ENCODE measurements at regions of chr2 and their contacts with region 1.

Region 1: DNA sequence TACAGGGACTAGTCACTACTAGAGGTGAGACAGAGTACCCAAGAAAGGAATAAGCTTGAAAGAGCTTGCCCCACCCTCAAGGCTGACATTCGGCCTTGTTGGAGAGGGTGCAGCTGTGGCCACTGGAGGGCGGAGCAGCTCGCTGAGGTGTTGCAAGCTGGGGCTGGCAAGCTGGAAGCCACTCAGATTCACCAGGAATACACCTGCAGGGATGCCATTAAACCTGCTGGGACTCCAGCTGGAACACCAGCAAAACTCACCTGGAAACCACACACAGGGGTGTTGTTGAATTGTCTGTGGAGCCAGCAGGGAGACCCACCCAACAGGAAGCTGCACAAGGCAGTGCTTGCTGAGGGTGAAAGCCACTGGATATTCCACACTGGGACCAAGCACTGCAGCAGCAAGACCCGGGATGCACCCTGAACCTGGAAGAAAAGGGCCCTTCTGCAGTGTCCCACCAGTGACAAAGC is 26.1 kb downstream of the KCTD18 start:
- DNase-seq: no peak
- H3K4me3 ChIP-seq: no peak overlapping the region
- H3K27ac ChIP-seq: no peak overlapping the region
- H3K4me1 ChIP-seq: no peaks in the 10 kb centered on the region
- H3K27me3 ChIP-seq: no peaks in the 10 kb centered on the region
- CTCF ChIP-seq: peak; percentile 6 to 33
- POLR2A ChIP-seq: no peak

Region 2: GRCh38 chr2:199922856-199923255 is 560.9 kb before region 1 on chr2:
- CTCF ChIA-PET with region 1: no interaction called
- POLR2A ChIA-PET with region 1: no interaction called
- dilution Hi-C with region 1: no loop called
- intact Hi-C with region 1: no loop called
- DNase-seq: no peak
- H3K4me3 ChIP-seq: no peak overlapping the region
- H3K27ac ChIP-seq: no peak overlapping the region
- H3K4me1 ChIP-seq: no peaks in the 10 kb centered on the region
- H3K27me3 ChIP-seq: no peaks in the 10 kb centered on the region
- CTCF ChIP-seq: no peak
- POLR2A ChIP-seq: no peak

Region 3: GRCh38 chr2:199973703-199974102 is 510.1 kb before region 1 on chr2:
- CTCF ChIA-PET with region 1: interaction called, 149 read pairs
- POLR2A ChIA-PET with region 1: no interaction called
- dilution Hi-C with region 1: no loop called
- intact Hi-C with region 1: no loop called
- DNase-seq: peak; percentile 57
- H3K4me3 ChIP-seq: no peak overlapping the region
- H3K27ac ChIP-seq: no peak overlapping the region
- H3K4me1 ChIP-seq: peaks cover 4% of the 10 kb centered on the region
- H3K27me3 ChIP-seq: no peaks in the 10 kb centered on the region
- CTCF ChIP-seq: peak; percentile 13 to 46
- POLR2A ChIP-seq: no peak

Region 4: GRCh38 chr2:199985625-199986207 is 498.0 kb before region 1 on chr2:
- CTCF ChIA-PET with region 1: interaction called, 62 read pairs
- POLR2A ChIA-PET with region 1: no interaction called
- dilution Hi-C with region 1: no loop called
- intact Hi-C with region 1: loop called (anchors 1 kb)
- DNase-seq: peak; percentile 43
- H3K4me3 ChIP-seq: no peak overlapping the region
- H3K27ac ChIP-seq: no peak overlapping the region
- H3K4me1 ChIP-seq: peaks cover 8% of the 10 kb centered on the region
- H3K27me3 ChIP-seq: peaks cover 2 to 3% of the 10 kb centered on the region in 2 experiments
- CTCF ChIP-seq: peak; percentile 56 to 68
- POLR2A ChIP-seq: no peak

Region 5: GRCh38 chr2:200405599-200406298 is 78.0 kb before region 1 on chr2:
- CTCF ChIA-PET with region 1: interaction called, 10 read pairs
- POLR2A ChIA-PET with region 1: no interaction called
- dilution Hi-C with region 1: no loop called
- intact Hi-C with region 1: no loop called
- DNase-seq: peak; percentile 94
- H3K4me3 ChIP-seq: peak overlapping the region in 1 of 3 experiments; percentile 61
- H3K27ac ChIP-seq: peak overlapping the region; percentile 99
- H3K4me1 ChIP-seq: peaks cover 47% of the 10 kb centered on the region
- H3K27me3 ChIP-seq: no peaks in the 10 kb centered on the region
- CTCF ChIP-seq: no peak
- POLR2A ChIP-seq: peak; percentile 31

Region 6: GRCh38 chr2:200494048-200494447 is 10.3 kb after region 1 on chr2:
- CTCF ChIA-PET with region 1: interaction called, 10 read pairs
- POLR2A ChIA-PET with region 1: no interaction called
- dilution Hi-C with region 1: no loop called
- intact Hi-C with region 1: no loop called
- DNase-seq: no peak
- H3K4me3 ChIP-seq: no peak overlapping the region
- H3K27ac ChIP-seq: no peak overlapping the region
- H3K4me1 ChIP-seq: no peaks in the 10 kb centered on the region
- H3K27me3 ChIP-seq: no peaks in the 10 kb centered on the region
- CTCF ChIP-seq: no peak
- POLR2A ChIP-seq: no peak

Region 7: DNA sequence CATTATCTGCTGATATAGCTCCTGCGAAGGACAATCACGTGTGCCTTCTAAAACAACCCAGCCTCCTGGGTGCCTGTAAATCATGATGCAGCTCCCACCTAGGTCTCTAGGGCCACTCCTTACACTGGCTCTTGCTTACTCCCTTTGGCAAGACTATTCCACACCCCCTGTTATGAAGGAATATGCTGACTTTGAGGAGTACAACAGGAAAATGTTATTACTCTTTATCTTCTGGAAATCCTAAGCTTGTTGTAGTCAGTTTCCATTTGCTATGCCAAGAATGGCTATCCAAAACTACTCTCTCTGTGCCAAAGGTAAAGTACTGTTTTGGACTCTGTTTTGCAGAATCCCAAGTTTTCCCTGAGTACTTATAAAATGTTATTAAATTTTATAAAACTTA is 50.0 kb after region 1 on chr2:
- CTCF ChIA-PET with region 1: no interaction called
- POLR2A ChIA-PET with region 1: interaction called, 12 read pairs
- dilution Hi-C with region 1: no loop called
- intact Hi-C with region 1: no loop called
- DNase-seq: no peak
- H3K4me3 ChIP-seq: no peak overlapping the region
- H3K27ac ChIP-seq: no peak overlapping the region
- H3K4me1 ChIP-seq: no peaks in the 10 kb centered on the region
- H3K27me3 ChIP-seq: no peaks in the 10 kb centered on the region
- CTCF ChIP-seq: no peak
- POLR2A ChIP-seq: no peak

Region 8: GRCh38 chr2:200735061-200735460 is 251.3 kb after region 1 on chr2:
- CTCF ChIA-PET with region 1: interaction called, 14 read pairs
- POLR2A ChIA-PET with region 1: no interaction called
- dilution Hi-C with region 1: no loop called
- intact Hi-C with region 1: loop called (anchors 10 kb)
- DNase-seq: no peak
- H3K4me3 ChIP-seq: no peak overlapping the region
- H3K27ac ChIP-seq: no peak overlapping the region
- H3K4me1 ChIP-seq: no peaks in the 10 kb centered on the region
- H3K27me3 ChIP-seq: peaks cover 0 to 2% of the 10 kb centered on the region in 2 experiments
- CTCF ChIP-seq: no peak
- POLR2A ChIP-seq: no peak